ENCODE measurements at regions of chr11 and their contacts with region 1.

Region 1: GRCh38 chr11:102419181-102419580 is 33.4 kb downstream of the TMEM123 start:
- DNase-seq: no peak

Region 2: GRCh38 chr11:102438311-102439062 is 19.3 kb after region 1 on chr11:
- intact Hi-C with region 1: loop called in 1 of 2 experiments (anchors 1 kb)
- DNase-seq: no peak

Measured in posterior vena cava (tissue), 2 donors.